WTC11 (cell line): ENCODE measurements at regions of chr16 and their contacts with region 1.

Region 1: GRCh38 chr16:15803618-15804017 is 53.2 kb downstream of the MYH11 start:
- DNase-seq: no peak
- ATAC-seq: no peak
- H3K4me3 Mint-ChIP-seq: no peak overlapping the region
- H3K27ac Mint-ChIP-seq: no peak overlapping the region
- H3K4me1 Mint-ChIP-seq: peaks cover 11% of the 10 kb centered on the region
- H3K27me3 Mint-ChIP-seq: no peaks in the 10 kb centered on the region
- CTCF ChIP-seq: no peak

Region 2: GRCh38 chr16:15749366-15749765 is 54.3 kb before region 1 on chr16:
- CTCF ChIA-PET with region 1: interaction called, 10 read pairs
- POLR2A ChIA-PET with region 1: no interaction called
- DNase-seq: no peak
- ATAC-seq: no peak
- H3K4me3 Mint-ChIP-seq: no peak overlapping the region
- H3K27ac Mint-ChIP-seq: no peak overlapping the region
- H3K4me1 Mint-ChIP-seq: peaks cover 4% of the 10 kb centered on the region
- H3K27me3 Mint-ChIP-seq: no peaks in the 10 kb centered on the region
- CTCF ChIP-seq: no peak

Region 3: DNA sequence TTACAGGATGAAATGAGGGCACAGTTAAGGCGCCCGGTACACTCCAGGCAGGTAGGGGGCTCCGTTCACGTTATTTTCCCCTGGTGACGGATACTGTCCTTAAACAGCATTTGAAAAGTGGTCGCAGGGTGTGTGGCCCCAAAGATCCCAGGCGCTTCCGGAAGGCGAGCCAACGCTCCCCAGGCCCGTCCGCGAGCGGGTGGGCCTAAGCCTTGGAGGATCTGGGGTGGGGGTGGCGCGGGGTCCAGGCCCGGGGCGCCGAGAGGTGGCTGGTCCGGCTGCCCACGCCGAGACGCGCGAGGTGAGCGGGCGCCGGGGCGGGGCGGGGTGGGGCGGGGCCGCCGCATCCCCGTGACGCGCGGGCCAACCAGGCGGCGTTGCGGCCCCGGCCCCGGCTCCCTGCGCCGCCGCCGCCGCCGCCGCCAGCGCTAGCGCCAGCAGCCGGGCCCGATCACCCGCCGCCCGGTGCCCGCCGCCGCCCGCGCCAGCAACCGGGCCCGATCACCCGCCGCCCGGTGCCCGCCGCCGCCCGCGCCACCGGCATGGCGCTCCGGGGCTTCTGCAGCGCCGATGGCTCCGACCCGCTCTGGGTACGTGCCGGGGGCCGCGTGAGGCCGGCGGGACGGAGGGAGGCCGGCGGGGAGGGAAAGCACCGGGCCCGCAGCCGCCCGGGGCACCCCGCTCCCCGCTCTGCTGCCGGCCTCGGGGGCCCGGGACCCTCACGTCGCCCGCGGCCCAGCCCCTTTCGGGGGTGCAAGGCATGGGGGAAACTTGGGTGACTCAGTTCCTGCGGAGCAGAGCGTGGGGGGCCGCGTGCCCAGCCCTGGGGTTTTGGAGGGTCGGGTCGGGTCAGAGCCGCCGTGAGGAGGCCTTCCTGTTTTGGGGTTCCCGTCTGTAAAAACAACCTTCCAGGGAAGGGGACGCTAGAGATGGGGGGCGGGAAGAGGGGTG is 145.9 kb after region 1 on chr16 and contains the start of gene ABCC1:
- CTCF ChIA-PET with region 1: no interaction called
- POLR2A ChIA-PET with region 1: no interaction called
- DNase-seq: peak; percentile 24
- ATAC-seq: peak; percentile 75
- H3K4me3 Mint-ChIP-seq: peak within 1 kb of the TSS; percentile 86
- H3K27ac Mint-ChIP-seq: peak within 1 kb of the TSS; percentile 93
- H3K4me1 Mint-ChIP-seq: peaks cover 35% of the 10 kb centered on the region
- H3K27me3 Mint-ChIP-seq: no peaks in the 10 kb centered on the region
- CTCF ChIP-seq: no peak
- total RNA-seq, gene ABCC1: 61.9 to 64.9 TPM (median 63.9 TPM) in 3 replicates